T-cell (primary cell): ENCODE measurements at regions of chr19 and their contacts with region 1.

Region 1: DNA sequence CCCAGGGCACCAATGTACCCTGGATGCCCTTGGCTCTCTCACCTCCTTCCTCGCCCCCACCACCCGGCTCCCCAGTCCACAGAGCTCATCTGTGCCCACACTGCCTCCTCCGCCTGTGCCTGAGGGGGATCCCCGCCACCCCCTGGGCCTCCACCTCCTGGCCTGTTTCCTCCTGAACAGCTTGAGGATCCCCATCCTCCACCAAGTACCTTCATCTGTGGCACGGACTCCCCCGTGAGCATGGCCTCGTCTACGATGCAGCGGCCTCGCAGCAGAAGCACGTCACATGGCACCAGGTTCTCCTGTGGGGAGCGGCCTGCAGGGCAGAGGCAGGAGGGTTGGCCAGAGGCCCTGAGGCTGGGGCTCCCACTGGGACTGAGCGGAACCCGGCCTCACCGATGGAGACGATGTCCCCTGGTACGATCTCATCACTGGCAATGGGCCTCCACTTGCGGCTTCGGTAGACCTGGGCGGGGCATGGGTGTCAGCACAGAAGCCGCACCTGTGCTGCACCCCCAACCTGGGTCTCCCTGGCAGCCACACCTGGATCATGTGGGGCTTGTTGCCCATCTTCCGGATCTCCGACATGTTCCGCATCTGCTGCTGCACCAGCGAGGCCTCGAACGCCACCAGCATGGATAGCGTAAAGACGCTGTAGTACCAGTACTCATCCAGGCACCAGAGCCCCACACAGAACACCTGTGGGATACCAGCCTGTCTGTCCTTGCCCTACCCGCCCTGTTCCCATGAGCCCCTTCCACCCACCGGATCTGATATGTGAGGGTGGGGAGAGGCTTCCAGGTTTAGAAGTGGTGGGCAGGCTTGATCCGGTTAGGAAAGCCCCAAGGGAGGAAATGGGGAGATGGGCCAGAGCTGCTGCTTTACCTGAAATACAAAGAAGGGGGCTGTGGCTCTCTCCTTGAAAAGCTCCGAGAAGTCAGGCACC is 6.8 kb downstream of the ATP13A1 start:
- DNase-seq: no peak
- ATAC-seq: no peak
- H3K4me3 ChIP-seq: no peak overlapping the region
- H3K4me3 Mint-ChIP-seq: no peak overlapping the region
- H3K27ac ChIP-seq: no peak overlapping the region
- H3K27ac Mint-ChIP-seq: peak overlapping the region in 1 of 2 donors; percentile 68
- H3K4me1 ChIP-seq: peaks cover 2 to 9% of the 10 kb centered on the region in 2 experiments
- H3K4me1 Mint-ChIP-seq: peaks cover 12 to 19% (median 18%) of the 10 kb centered on the region in 3 donors
- H3K27me3 ChIP-seq: no peaks in the 10 kb centered on the region
- H3K27me3 Mint-ChIP-seq: no peaks in the 10 kb centered on the region

Region 2: GRCh38 chr19:19606021-19606420 is 50.7 kb before region 1 on chr19:
- CTCF ChIA-PET with region 1: no interaction called
- POLR2A ChIA-PET with region 1: interaction called in 1 of 2 experiments, 11 read pairs
- DNase-seq: peak in 34 of 35 experiments; percentile 25 to 77 (median 53)
- ATAC-seq: peak; percentile 85 to 90 (median 89)
- H3K4me3 ChIP-seq: no peak overlapping the region
- H3K4me3 Mint-ChIP-seq: peak overlapping the region; percentile 47 to 57 (median 55)
- H3K27ac ChIP-seq: peak overlapping the region; percentile 85
- H3K27ac Mint-ChIP-seq: peak overlapping the region; percentile 96 to 97
- H3K4me1 ChIP-seq: peaks cover 36 to 58% of the 10 kb centered on the region in 2 experiments
- H3K4me1 Mint-ChIP-seq: peaks cover 57 to 69% (median 66%) of the 10 kb centered on the region in 3 donors
- H3K27me3 ChIP-seq: no peaks in the 10 kb centered on the region
- H3K27me3 Mint-ChIP-seq: no peaks in the 10 kb centered on the region